CD8-positive, alpha-beta T cell (primary cell): ENCODE measurements at regions of chr7 and their contacts with region 1.

Region 1: DNA sequence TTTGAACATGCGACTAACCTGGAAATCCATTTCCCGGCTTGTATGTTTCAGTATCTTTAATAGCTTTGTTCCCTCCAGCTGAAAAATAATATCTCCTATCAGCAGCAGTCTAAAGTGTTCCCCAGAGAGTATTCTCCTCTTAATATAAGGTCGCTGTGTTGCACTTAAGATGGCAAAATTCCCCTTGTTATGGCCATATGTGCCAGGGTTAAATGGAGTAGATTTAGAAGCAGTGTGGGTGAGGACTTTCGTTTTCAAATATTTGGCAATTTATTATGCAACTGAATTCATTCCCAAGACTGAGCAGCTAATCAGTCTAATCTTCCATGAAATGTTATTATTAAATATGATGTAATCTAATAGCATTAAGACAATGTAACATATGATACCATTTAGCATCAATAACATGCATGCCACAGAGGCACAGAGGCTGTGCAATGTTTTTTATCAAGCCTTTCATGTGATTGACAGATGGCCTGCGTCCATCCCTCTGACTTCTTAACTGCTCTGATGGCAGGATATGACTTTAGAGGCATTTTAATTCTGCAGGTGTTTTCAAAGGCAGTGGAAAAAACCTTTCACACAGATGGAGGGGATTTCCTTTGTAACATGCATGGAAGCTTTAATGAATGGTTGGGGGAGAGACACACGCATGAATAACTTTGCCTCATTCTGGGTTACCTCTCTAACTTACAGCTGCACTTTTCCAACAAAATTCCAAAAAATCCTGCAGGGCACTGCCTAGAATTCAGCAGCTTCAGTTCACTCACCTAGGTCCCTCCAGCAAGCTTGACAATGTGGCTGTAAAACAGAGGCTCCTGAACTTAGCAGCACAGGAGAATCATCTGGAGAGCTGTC is 55.1 kb upstream of the ZPBP start:
- DNase-seq: peak in 4 of 9 experiments; percentile 18 to 85 (median 60)
- ATAC-seq: peak; percentile 89
- H3K4me3 ChIP-seq: no peak overlapping the region
- H3K4me3 Mint-ChIP-seq: peak overlapping the region; percentile 42
- H3K27ac ChIP-seq: no peak overlapping the region
- H3K27ac Mint-ChIP-seq: peak overlapping the region; percentile 80
- H3K4me1 ChIP-seq: peaks cover 21% of the 10 kb centered on the region
- H3K4me1 Mint-ChIP-seq: peaks cover 36% of the 10 kb centered on the region
- H3K27me3 ChIP-seq: no peaks in the 10 kb centered on the region
- H3K27me3 Mint-ChIP-seq: no peaks in the 10 kb centered on the region
- CTCF ChIP-seq: no peak

Region 2: GRCh38 chr7:48781783-48782182 is 1366.4 kb before region 1 on chr7:
- CTCF ChIA-PET with region 1: no interaction called
- POLR2A ChIA-PET with region 1: no interaction called
- intact Hi-C with region 1: no loop called
- DNase-seq: no peak
- ATAC-seq: no peak
- H3K4me3 ChIP-seq: no peak overlapping the region
- H3K4me3 Mint-ChIP-seq: no peak overlapping the region
- H3K27ac ChIP-seq: no peak overlapping the region
- H3K27ac Mint-ChIP-seq: no peak overlapping the region
- H3K4me1 ChIP-seq: no peaks in the 10 kb centered on the region
- H3K4me1 Mint-ChIP-seq: no peaks in the 10 kb centered on the region
- H3K27me3 ChIP-seq: no peaks in the 10 kb centered on the region
- H3K27me3 Mint-ChIP-seq: no peaks in the 10 kb centered on the region
- CTCF ChIP-seq: no peak

Region 3: GRCh38 chr7:50166997-50167965 is 19.1 kb after region 1 on chr7:
- CTCF ChIA-PET with region 1: interaction called, 4 read pairs
- POLR2A ChIA-PET with region 1: no interaction called
- intact Hi-C with region 1: loop called (anchors 2 kb)
- DNase-seq: peak in 6 of 9 experiments; percentile 23 to 67 (median 49)
- ATAC-seq: peak; percentile 86
- H3K4me3 ChIP-seq: no peak overlapping the region
- H3K4me3 Mint-ChIP-seq: peak overlapping the region; percentile 20
- H3K27ac ChIP-seq: peak overlapping the region in 1 of 2 experiments; percentile 45
- H3K27ac Mint-ChIP-seq: peak overlapping the region; percentile 87
- H3K4me1 ChIP-seq: peaks cover 48% of the 10 kb centered on the region
- H3K4me1 Mint-ChIP-seq: peaks cover 58% of the 10 kb centered on the region
- H3K27me3 ChIP-seq: no peaks in the 10 kb centered on the region
- H3K27me3 Mint-ChIP-seq: no peaks in the 10 kb centered on the region
- CTCF ChIP-seq: no peak